Mucosa of descending colon (tissue), 3 donors: ENCODE measurements at regions of chr15 and their contacts with region 1.

Region 1: GRCh38 chr15:76185716-76186115 is 125.6 kb downstream of the ETFA start:
- DNase-seq: peak in 2 of 3 donors; percentile 15 to 29
- ATAC-seq: peak; percentile 81
- H3K4me3 ChIP-seq: no peak overlapping the region
- H3K4me1 ChIP-seq: peaks cover 3% of the 10 kb centered on the region
- CTCF ChIP-seq: peak; percentile 42

Region 2: GRCh38 chr15:76135516-76135915 is 50.2 kb before region 1 on chr15:
- intact Hi-C with region 1: no loop called
- DNase-seq: no peak
- ATAC-seq: no peak
- H3K4me3 ChIP-seq: no peak overlapping the region
- H3K4me1 ChIP-seq: no peaks in the 10 kb centered on the region
- CTCF ChIP-seq: no peak

Region 3: GRCh38 chr15:76336254-76337058 is 150.7 kb after region 1 on chr15 and contains the start of gene ISL2:
- intact Hi-C with region 1: loop called in 1 of 2 experiments (anchors 10 kb)
- DNase-seq: peak; percentile 73 to 87 (median 79)
- ATAC-seq: peak; percentile 41
- H3K4me3 ChIP-seq: no peak within 1 kb of the TSS
- H3K4me1 ChIP-seq: peaks cover 38% of the 10 kb centered on the region
- CTCF ChIP-seq: no peak
- total RNA-seq, gene ISL2: 0.51 to 2.1 (median 0.87) TPM